ENCODE measurements at regions of chr1 and their contacts with region 1.

Region 1: DNA sequence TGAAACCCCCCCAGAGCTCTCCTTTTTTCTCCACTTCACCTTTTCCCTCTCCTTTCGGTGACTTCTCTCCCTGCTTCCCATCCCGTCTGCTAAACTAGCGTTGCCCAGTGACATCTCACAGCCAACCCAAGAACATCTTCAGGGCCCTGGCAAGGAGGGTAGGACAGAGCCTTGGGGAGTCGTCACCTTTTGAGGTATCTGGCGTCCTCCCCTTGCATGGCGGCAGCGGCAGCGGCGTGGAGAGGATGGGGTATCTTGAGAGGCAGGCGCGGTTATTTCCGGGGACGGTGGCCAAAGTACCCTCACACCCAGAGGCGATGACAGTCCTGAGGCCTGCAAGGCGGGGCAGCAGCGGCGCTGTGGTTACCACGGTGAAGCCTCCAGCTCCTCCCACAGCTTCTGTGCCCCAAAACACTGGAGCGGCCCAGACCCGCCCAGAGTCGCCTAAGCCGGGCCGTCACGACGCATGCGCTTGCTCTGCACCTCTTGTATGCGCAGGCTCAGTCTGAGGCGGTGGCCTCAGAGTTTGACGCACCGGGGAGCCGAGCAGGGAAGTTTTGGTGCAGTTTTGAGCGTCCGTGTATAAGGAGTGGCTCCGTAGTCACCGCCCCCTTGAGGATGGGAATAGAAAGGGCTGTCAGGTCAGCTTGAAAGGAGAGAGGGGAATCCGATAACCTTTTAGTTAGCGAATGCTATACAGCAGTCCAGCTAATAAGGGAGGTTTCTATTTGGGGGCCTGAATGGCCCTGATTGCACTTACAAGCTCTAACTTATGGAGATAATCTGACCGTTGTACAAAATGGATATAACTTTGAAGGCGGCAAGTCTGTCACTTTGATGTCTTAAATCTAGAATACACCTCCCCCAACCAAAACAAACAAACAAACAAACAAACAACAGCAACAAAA is at the start of gene KIFAP3:
- DNase-seq: peak; percentile 99
- H3K4me3 Mint-ChIP-seq: peak within 1 kb of the TSS; percentile 91
- H3K27ac Mint-ChIP-seq: peak within 1 kb of the TSS; percentile 93
- H3K4me1 Mint-ChIP-seq: peaks cover 38% of the 10 kb centered on the region
- H3K27me3 Mint-ChIP-seq: peaks cover 2% of the 10 kb centered on the region
- total RNA-seq, gene KIFAP3: 11.9 and 12.8 TPM in 2 replicates

Region 2: GRCh38 chr1:169485544-169486278 is 588.8 kb before region 1 on chr1 and contains the start of gene SLC19A2:
- intact Hi-C with region 1: loop called (anchors 10 kb)
- DNase-seq: peak; percentile 98
- H3K4me3 Mint-ChIP-seq: peak within 1 kb of the TSS; percentile 98
- H3K27ac Mint-ChIP-seq: peak within 1 kb of the TSS; percentile 94
- H3K4me1 Mint-ChIP-seq: peaks cover 46% of the 10 kb centered on the region
- H3K27me3 Mint-ChIP-seq: no peaks in the 10 kb centered on the region
- total RNA-seq, gene SLC19A2: 12.1 and 12.2 TPM in 2 replicates

Region 3: GRCh38 chr1:169694304-169695075 is 380.0 kb before region 1 on chr1:
- intact Hi-C with region 1: loop called (anchors 10 kb)
- DNase-seq: peak; percentile 88
- H3K4me3 Mint-ChIP-seq: peak overlapping the region; percentile 26
- H3K27ac Mint-ChIP-seq: peak overlapping the region; percentile 79
- H3K4me1 Mint-ChIP-seq: peaks cover 84% of the 10 kb centered on the region
- H3K27me3 Mint-ChIP-seq: no peaks in the 10 kb centered on the region

Region 4: GRCh38 chr1:169794530-169795416 is 279.7 kb before region 1 on chr1 and contains the start of gene METTL18:
- intact Hi-C with region 1: loop called (anchors 1 kb)
- DNase-seq: peak; percentile 98
- H3K4me3 Mint-ChIP-seq: peak within 1 kb of the TSS; percentile 99
- H3K27ac Mint-ChIP-seq: peak within 1 kb of the TSS; percentile 97
- H3K4me1 Mint-ChIP-seq: peaks cover 45% of the 10 kb centered on the region
- H3K27me3 Mint-ChIP-seq: no peaks in the 10 kb centered on the region
- total RNA-seq, gene METTL18: 9.3 and 10.3 TPM in 2 replicates

Region 5: DNA sequence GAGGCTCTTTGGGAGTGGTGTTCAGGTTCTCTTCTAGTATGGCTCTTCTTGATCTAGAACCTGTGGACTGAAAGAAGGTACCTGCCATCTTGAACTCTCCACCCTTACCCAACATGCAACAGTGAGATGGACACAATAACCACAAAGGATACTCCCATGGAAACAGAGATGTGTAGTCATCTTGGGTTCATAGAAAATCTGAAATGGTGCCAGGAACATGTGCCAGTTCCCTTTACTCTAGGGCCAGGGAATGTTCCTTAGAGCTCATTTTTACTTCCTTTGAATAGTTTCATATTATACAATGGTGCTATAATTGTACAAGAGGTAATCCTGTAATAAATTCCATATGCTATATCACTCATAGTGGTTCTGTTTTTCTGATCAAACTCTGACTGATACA is 167.6 kb before region 1 on chr1:
- intact Hi-C with region 1: loop called (anchors 5 kb)
- DNase-seq: no peak
- H3K4me3 Mint-ChIP-seq: no peak overlapping the region
- H3K27ac Mint-ChIP-seq: no peak overlapping the region
- H3K4me1 Mint-ChIP-seq: peaks cover 27% of the 10 kb centered on the region
- H3K27me3 Mint-ChIP-seq: peaks cover 3% of the 10 kb centered on the region

Region 6: DNA sequence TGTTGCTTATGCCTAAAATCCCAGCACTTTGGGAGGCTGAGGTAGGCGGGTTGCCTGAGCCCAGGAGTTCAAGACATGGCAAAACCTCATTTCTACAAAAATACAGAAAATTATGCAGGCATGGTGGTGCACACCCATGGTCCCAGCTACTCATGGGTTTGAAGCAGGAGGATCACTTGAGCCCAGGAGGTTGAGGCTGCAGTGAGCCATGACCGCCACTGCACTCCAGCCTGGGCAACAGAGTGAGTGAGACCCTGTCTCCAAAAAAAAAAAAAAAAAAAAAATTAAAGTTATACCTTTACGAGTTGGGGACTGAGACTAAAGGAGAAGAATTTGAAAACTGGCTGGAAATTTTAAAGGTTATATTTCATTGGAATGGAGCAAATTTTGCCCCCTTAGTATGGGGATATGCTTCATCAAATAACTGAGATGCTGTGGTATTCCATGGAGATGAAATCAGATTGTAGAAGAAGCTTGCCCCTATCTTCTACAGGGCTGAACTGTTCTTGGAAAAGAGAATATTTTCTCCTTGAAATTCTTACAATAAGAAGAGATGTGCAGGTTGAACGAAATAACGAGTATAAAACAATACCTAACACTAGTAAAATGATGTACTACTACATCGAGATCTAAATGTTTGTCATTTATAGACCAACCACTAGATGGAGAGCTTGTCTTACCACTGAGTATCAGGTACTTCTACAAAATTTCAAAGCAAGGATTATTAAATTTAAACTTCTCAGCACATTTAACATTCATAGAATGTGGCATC is 145.9 kb before region 1 on chr1:
- intact Hi-C with region 1: loop called (anchors 5 kb)
- DNase-seq: peak; percentile 37
- H3K4me3 Mint-ChIP-seq: no peak overlapping the region
- H3K27ac Mint-ChIP-seq: no peak overlapping the region
- H3K4me1 Mint-ChIP-seq: peaks cover 6% of the 10 kb centered on the region
- H3K27me3 Mint-ChIP-seq: peaks cover 7% of the 10 kb centered on the region

Region 7: DNA sequence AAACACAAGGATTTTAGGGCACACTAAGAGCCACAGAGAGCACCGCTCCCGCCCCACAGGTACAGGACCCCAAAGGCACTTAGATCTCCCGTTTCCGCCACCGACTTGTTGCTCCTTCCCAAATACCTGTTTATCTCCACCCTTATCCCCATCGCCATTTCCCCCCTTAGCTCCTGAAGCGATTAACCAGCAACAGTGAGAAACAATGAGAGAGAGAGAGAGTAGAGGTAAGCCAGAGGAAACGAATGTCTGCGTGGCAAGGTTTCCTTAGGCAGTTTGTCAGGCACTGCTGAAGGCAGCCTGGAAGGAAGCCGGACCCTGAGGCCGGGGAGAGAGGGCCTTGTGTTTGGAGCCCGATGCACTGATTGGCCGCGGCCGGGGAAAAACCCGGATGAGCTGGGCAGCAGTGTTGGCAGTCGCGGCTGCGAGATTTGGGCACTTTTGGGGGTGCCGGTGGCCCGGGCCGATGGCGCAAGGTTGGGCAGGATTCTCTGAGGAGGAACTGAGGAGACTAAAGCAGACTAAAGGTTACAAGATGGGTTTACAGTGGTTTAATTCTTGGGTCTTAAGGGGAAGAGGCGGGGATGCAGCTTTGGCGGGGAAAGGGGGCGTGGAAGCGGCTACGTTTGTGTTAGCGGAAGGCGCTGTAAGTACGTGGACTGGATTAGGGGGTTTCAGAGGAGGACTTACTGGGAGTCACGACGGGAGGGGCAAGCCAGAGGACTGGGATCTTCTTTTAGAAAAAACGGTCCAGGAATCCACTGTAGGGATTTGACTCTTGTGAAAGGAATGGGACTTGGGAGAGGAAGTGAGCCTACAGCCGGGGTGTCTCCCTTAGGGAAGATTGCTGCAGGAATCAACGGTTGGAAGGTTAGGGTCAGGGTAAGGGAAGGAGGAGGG is 457.5 kb after region 1 on chr1 and contains the start of gene GORAB:
- intact Hi-C with region 1: loop called (anchors 2 kb)
- DNase-seq: peak; percentile 96
- H3K4me3 Mint-ChIP-seq: no peak within 1 kb of the TSS
- H3K27ac Mint-ChIP-seq: no peak within 1 kb of the TSS
- H3K4me1 Mint-ChIP-seq: peaks cover 5% of the 10 kb centered on the region
- H3K27me3 Mint-ChIP-seq: peaks cover 13% of the 10 kb centered on the region
- total RNA-seq, gene GORAB: 12.8 and 13.0 TPM in 2 replicates

Measured in activated CD4-positive, alpha-beta T cell treated with anti-CD3 and anti-CD28 coated beads, Interleukin-2, amount 10 ng/mL, durations not matched to agents 24 days and 14 days (primary cell).